AG04449 (cell line): ENCODE measurements at regions of chr22 and their contacts with region 1.

Region 1: DNA sequence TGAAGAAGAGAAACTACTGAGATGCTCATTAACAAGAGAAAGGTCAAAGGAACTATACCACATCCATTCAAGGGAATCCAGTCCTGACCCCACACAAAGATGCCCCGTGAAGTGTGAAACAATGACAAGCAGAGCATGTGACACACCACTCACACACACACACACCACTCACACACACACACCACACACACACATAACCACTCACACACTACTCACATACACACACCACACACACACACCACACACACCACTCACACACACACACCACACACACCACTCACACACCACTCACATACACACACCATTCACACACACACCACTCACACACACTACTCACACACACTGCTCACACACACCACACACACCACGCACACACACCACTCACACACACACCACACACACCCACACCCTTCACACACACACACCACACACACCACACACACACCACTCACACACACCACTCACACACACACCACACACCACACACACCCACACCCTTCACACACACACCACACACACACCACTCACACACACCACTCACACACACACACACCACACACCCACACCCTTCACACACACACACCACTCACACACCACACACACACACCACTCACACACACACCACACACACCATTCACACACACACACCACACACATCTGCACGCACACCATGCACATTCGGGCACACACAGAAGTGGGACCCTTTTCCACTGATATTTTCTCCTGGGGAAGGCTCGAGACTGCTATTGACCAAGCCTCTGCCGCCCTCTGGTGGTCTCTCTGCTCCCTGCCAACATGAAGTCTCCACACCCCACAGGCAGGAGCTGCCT is 32.0 kb upstream of the COMT start:
- DNase-seq: peak; percentile 5
- H3K4me3 ChIP-seq: no peak overlapping the region
- CTCF ChIP-seq: peak; percentile 89

Region 2: GRCh38 chr22:19607192-19608002 is 302.2 kb before region 1 on chr22:
- CTCF ChIA-PET with region 1: no interaction called
- POLR2A ChIA-PET with region 1: no interaction called
- DNase-seq: no peak
- H3K4me3 ChIP-seq: no peak overlapping the region
- CTCF ChIP-seq: no peak

Region 3: GRCh38 chr22:19756288-19757128 is 153.1 kb before region 1 on chr22:
- CTCF ChIA-PET with region 1: interaction called, 16 read pairs
- POLR2A ChIA-PET with region 1: no interaction called
- DNase-seq: no peak
- H3K4me3 ChIP-seq: no peak overlapping the region
- CTCF ChIP-seq: peak; percentile 52

Region 4: GRCh38 chr22:19891317-19892256 is 18.0 kb before region 1 on chr22:
- CTCF ChIA-PET with region 1: interaction called, 76 read pairs
- POLR2A ChIA-PET with region 1: no interaction called
- DNase-seq: no peak
- H3K4me3 ChIP-seq: no peak overlapping the region
- CTCF ChIP-seq: no peak

Region 5: DNA sequence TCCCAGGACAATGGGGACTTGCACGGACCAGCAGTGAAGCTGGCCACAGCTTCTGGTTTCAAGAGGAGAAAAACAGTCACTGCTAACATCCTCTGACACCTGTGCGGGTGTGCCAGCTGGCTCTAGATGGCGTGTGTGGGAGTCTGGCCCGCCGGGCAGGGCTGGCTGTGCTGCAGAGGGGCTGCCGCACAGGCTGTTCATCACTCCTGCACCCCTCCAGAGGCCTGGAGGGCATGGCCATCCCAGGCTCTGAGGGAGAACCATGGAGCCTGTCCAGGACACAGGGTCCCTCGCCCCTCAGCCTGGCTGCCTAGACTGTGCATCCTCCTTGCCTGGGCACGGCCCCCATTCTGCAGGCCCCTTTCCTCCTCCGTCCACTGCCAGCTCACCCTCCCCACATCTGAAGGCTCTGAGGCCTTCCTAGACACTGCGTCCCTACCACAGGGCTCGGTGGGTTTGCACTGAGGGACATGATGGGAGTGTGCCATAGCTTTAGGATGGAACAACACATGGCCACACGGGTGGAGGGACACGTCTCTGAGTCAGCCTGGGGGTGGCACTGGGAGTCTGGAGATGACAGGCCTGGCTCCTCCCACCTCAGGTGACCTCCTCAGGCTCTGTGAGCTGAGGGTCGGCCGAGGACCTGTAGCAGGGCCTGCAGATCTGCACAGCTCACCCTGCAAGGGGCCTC is 12.8 kb before region 1 on chr22:
- CTCF ChIA-PET with region 1: interaction called, 76 read pairs
- POLR2A ChIA-PET with region 1: no interaction called
- DNase-seq: no peak
- H3K4me3 ChIP-seq: no peak overlapping the region
- CTCF ChIP-seq: no peak

Region 6: GRCh38 chr22:19948057-19948760 is 38.6 kb after region 1 on chr22:
- CTCF ChIA-PET with region 1: interaction called, 10 read pairs
- POLR2A ChIA-PET with region 1: no interaction called
- DNase-seq: no peak
- H3K4me3 ChIP-seq: no peak overlapping the region
- CTCF ChIP-seq: no peak

Region 7: DNA sequence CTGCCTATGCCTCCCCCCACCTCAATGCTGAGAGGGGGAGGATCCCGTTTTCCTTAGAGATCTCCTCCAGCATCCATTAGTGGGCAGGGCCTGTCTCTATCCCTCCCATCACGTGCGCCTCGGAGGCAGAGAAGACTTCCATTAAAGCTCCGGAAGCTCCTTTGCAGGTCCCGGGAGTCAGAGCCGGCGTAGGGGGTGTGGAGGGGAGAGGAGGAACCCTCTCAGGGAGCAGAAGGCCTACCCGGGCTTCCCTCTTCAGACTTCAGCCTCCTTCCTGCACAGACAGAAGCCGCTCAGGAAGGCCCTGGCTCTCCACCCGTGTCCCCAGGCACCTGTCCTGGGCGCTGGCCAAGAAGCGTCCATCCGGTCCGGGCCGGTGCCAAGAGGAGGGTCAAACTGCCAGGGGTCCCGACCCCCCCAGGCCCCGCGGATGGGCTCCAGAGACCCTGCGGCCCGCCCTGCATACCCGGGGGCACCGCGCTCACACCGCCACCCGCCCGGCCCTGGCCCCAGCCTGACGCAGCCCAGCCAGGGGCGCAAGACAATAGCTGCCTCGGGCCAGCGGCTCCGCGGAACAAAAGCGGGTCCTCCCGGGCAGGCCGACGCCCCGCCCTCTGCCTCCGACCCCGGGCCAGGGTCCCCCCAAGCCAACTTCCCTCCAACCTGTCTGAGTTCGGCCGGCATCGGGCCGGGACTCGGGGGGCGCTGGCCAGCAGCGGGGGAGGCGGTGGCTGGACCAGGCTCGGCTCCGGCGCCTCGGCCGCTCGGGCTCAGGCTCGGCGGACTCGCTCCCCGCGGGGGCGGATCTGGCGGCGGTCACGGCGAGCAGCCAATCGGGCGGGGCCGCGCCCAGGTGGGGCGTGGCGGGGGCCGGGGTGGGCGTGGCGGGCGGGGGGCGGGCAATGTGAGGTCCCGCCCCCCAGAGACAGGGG is 77.1 kb after region 1 on chr22:
- CTCF ChIA-PET with region 1: no interaction called
- POLR2A ChIA-PET with region 1: no interaction called
- DNase-seq: no peak
- H3K4me3 ChIP-seq: peak overlapping the region; percentile 64
- CTCF ChIP-seq: no peak